Endothelial cell of umbilical vein (primary cell): ENCODE measurements at regions of chr1 and their contacts with region 1.

Region 1: DNA sequence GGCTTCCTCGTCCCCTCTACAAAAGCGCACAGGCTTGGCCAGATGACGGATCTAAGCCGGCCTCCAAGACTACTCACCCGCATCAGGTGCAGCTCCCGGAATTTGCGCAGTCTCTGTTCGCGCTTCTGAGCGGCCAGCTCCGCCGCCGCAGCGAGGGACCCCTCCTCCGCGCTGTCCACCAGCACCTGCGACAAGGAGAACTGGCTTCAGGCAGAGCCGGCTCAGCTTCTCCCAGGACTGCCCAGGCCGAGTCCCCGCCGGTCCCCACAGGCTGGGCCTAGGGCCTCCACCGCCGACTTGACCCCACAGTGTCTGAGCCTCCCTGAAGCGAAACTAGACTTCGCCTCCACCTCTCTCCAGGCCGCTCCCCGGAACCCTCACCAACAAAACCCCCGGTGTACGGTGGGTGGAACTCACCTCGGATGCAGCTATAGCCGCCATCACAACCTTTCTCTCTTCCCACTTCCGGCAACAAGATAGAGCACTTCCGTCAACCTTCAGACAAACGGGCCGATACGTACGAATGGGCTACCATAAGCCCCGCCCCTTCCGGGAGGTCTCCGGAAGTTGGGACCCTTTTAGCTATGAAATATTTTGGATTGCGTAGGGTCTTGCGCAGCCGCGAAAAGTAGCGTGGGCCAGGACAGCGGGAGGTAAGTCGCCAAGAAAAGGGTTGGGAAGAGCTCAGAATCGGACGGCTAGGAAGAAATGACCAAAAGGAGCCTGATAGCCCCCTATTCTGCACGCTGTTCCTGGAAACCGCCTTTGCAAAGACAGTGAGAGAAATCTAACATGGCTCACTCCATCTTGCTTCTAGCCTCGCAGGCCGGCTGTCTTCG is at the start of gene SYF2:
- DNase-seq: peak; percentile 89
- H3K4me3 ChIP-seq: peak within 1 kb of the TSS; percentile 64 to 88 (median 87)
- H3K27ac ChIP-seq: peak within 1 kb of the TSS; percentile 60
- H3K4me1 ChIP-seq: peaks cover 26% of the 10 kb centered on the region
- H3K27me3 ChIP-seq: no peaks in the 10 kb centered on the region
- CTCF ChIP-seq: no peak
- POLR2A ChIP-seq: peak; percentile 57
- total RNA-seq, gene SYF2: 38.0 and 40.2 TPM in 2 replicates

Region 2: DNA sequence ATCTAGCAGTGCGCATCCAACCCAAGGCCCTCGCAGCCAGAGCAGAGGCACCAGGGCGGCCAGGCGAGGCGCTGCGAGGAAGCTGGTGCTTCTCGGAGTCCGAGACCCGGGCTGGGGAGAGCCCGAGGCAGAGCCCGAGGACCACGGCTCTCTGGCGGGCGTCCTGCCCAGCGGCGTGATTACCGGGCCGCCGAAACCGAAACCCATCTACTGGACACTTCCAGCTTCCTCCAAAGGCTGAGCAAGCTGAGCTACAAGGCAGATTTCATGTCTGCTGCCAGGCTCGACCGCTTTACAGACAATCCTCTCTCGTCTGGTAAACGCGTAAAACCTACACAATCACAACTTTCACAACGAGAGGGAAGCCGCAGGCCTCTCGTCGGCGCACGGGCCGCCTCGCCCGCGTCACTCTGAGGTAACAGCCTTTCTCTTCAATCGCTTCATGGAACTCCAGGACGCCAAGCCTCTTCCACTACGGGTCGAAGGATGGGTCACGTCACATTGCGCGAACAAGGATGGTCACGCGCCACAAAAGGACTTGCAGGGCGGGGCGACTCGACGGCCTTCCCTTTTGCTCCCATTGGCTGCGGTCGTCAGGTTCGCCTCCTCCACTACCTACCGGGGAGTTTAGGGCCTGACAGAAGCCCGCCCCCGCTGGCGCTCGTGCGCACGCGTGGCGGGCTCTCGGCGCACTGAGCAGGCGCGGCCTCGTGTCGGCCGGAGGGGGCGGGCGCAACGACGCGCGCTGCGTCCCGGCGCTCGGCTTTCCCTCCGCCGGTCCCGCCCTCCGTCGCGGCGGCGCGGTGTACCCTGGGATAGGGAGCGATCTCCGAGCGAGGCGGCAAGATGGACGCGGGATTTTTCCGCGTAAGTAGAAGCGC is 589.5 kb before region 1 on chr1 and contains the start of gene SRRM1:
- CTCF ChIA-PET with region 1: no interaction called
- POLR2A ChIA-PET with region 1: no interaction called
- dilution Hi-C with region 1: no loop called
- intact Hi-C with region 1: loop called (anchors 5 kb)
- DNase-seq: peak; percentile 100
- H3K4me3 ChIP-seq: peak within 1 kb of the TSS; percentile 81 to 100 (median 81)
- H3K27ac ChIP-seq: peak within 1 kb of the TSS; percentile 84
- H3K4me1 ChIP-seq: peaks cover 18% of the 10 kb centered on the region
- H3K27me3 ChIP-seq: peaks cover 0 to under 1% of the 10 kb centered on the region in 2 experiments
- CTCF ChIP-seq: no peak
- POLR2A ChIP-seq: peak; percentile 98
- total RNA-seq, gene SRRM1: 157 and 163 TPM in 2 replicates

Region 3: GRCh38 chr1:25198663-25199252 is 33.5 kb before region 1 on chr1:
- CTCF ChIA-PET with region 1: no interaction called
- POLR2A ChIA-PET with region 1: no interaction called
- dilution Hi-C with region 1: no loop called
- intact Hi-C with region 1: no loop called
- DNase-seq: no peak
- H3K4me3 ChIP-seq: no peak overlapping the region
- H3K27ac ChIP-seq: no peak overlapping the region
- H3K4me1 ChIP-seq: no peaks in the 10 kb centered on the region
- H3K27me3 ChIP-seq: peaks cover 7 to 8% of the 10 kb centered on the region in 2 experiments
- CTCF ChIP-seq: no peak
- POLR2A ChIP-seq: no peak

Region 4: DNA sequence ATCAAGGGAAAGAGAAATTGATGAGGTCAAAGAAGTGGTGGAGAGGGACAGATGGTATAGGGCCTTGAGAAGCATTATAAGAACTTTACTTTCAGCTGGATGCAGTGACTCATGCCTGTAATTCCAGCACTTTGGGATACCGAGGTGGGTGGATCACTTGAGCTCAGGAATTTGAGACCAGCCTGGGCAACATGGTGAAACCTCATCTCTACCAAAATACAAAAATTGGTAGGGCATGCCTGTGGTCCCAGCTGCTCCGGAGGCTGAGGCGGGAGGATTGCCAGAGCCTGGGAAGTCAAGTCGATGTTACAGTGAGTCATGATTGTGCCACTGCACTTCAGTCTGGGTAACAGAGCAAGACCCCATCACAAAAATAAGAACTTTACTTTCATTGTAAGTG is 111.6 kb after region 1 on chr1:
- CTCF ChIA-PET with region 1: no interaction called
- POLR2A ChIA-PET with region 1: no interaction called
- dilution Hi-C with region 1: no loop called
- intact Hi-C with region 1: no loop called
- DNase-seq: no peak
- H3K4me3 ChIP-seq: no peak overlapping the region
- H3K27ac ChIP-seq: no peak overlapping the region
- H3K4me1 ChIP-seq: peaks cover 15% of the 10 kb centered on the region
- H3K27me3 ChIP-seq: no peaks in the 10 kb centered on the region
- CTCF ChIP-seq: no peak
- POLR2A ChIP-seq: no peak